Gastrocnemius medialis (tissue), 4 donors: ENCODE measurements at regions of chr4 and their contacts with region 1.

Region 1: DNA sequence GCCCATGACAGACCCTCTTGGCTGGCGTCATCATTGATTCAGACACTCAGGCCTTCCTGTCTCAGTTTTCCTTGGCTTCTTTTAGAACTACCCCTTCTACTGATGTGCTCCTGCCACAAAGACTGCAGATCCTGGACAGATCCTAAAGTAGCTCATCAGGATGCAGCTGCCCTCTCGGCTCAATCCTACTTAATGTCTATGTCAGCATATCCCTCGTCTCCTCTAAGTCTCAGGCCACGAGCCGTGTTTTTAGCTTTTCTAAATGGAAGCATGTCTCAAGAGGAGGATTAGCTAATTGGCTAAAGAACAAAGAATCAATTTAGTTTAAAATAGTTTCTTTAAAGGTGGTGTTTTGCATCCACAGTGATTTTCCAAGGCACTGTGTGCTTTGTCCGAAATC is 447.7 kb downstream of the STIM2 start:
- DNase-seq: no peak
- ATAC-seq: no peak
- H3K4me3 ChIP-seq: no peak overlapping the region
- H3K27ac ChIP-seq: no peak overlapping the region
- H3K4me1 ChIP-seq: no peaks in the 10 kb centered on the region
- H3K27me3 ChIP-seq: no peaks in the 10 kb centered on the region
- CTCF ChIP-seq: no peak
- POLR2A ChIP-seq: no peak

Region 2: DNA sequence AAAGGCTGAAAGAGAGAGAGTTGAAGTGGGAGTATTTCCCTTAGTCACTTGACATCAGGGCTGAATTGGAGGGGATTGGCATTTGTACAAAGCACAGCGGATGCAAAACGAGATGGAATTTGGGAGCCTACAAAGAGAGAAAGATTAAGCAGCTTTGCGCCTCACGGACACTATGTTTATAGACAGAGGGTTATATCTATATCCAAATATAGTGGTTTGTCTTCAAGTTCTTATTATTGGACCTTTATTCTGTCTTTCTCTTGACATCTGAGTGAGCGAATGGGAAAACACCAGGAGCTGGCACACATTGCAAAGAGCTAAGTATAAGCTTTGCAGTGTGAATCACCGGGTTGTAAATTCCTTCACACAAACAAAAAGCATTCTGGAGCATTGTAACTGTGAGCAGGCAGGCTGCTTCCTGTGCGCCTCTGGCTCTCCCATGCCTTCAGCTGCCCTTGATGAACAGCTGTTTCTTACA is 52.5 kb after region 1 on chr4:
- in situ Hi-C with region 1: loop called in 1 of 4 experiments (anchors 10 kb)
- intact Hi-C with region 1: no loop called
- DNase-seq: no peak
- ATAC-seq: no peak
- H3K4me3 ChIP-seq: peak overlapping the region in 1 of 4 donors; percentile 5
- H3K27ac ChIP-seq: no peak overlapping the region
- H3K4me1 ChIP-seq: no peaks in the 10 kb centered on the region
- H3K27me3 ChIP-seq: no peaks in the 10 kb centered on the region
- CTCF ChIP-seq: no peak
- POLR2A ChIP-seq: no peak